HepG2 (cell line): ENCODE measurements at regions of chr12 and their contacts with region 1.

Region 1: DNA sequence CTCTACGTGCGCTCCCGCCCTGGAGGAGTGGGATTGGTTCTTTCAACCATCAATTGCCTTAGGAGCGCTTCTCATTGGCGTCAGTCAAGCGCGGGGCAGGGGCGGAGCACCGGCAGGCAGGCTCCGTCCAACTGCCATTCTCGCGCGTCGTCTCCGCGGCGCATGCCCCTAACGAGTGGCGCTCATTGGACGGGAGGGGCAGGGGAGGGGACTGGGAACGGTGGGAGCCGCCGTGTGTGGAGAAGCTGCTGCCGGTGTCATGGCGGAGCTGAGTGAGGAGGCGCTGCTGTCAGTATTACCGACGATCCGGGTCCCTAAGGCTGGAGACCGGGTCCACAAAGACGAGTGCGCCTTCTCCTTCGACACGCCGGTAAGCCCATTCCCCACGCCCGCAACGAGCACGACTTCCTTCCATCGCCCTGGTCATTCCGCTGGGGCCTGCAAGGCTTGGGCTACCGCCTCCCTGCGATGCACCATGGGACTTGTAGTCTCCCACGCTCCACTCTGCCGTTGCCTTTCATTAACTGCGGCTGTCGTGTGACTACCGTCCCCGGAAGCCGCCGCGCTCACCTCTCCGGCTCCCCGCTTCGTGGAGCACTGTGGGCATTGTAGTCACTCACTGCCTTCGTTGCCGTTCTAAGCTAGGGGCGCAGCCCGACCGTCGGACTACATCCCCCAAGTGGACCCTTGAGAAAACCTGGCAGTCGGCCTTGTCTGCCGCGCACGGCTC is at the start of gene USP5:
- DNase-seq: peak; percentile 98
- ATAC-seq: peak; percentile 86
- H3K4me3 ChIP-seq: peak within 1 kb of the TSS; percentile 79 to 95 (median 85)
- H3K27ac ChIP-seq: peak within 1 kb of the TSS; percentile 82
- H3K4me1 ChIP-seq: peaks cover 33% of the 10 kb centered on the region
- H3K27me3 ChIP-seq: no peaks in the 10 kb centered on the region
- CTCF ChIP-seq: 0 out of 2 replicates have a peak, but pooled peaks have one; percentile 7
- EP300 ChIP-seq: no peak
- POLR2A ChIP-seq: peak; percentile 70 to 90
- RAD21 ChIP-seq: peak; percentile 65
- total RNA-seq, gene USP5: 53.4 and 56.0 TPM in 2 replicates

Region 2: GRCh38 chr12:6559500-6559899 is 292.6 kb before region 1 on chr12:
- CTCF ChIA-PET with region 1: no interaction called
- POLR2A ChIA-PET with region 1: no interaction called
- in situ Hi-C with region 1: no loop called
- intact Hi-C with region 1: no loop called
- DNase-seq: no peak
- ATAC-seq: no peak
- H3K4me3 ChIP-seq: no peak overlapping the region
- H3K27ac ChIP-seq: no peak overlapping the region
- H3K4me1 ChIP-seq: peaks cover 11% of the 10 kb centered on the region
- H3K27me3 ChIP-seq: no peaks in the 10 kb centered on the region; a peak in 1 of 5 replicates
- CTCF ChIP-seq: no peak
- EP300 ChIP-seq: no peak
- POLR2A ChIP-seq: no peak
- RAD21 ChIP-seq: no peak

Region 3: DNA sequence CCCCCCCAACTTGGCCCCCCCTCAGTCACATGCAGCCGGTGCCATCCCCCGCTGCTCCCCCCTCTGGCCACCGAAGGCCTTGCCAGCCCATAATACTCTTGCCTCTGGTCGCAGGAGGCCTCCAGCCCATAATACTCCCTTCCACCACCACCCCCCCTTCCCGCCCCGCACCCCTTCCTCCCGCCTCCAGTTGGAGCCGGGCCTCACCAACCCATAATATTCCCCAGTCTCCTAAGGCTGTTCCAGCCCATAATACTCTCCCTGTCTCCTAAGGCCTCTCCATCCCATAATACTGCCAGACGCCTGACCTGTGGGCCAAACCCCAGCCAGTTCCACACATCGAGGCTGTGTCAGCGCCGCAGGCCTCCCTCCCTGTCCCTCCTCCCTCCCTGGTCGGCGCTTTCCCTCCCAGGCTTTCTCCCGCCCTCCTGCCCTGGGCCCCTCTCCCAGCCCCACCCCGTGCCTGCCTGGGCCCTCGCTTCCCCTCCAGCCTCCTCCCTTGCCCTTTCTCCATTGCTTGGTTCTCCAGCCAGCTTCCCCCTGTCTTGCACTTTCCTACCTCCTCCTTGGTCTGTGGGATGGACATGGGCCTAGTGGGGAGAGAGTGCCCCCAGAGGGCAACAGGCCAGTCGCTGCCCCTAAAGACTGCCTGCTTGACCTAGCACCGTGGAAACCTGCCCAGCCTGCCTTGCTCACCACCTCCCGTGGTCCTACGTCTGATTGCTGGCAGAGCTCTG is 238.1 kb before region 1 on chr12:
- CTCF ChIA-PET with region 1: no interaction called
- POLR2A ChIA-PET with region 1: interaction called, 14 read pairs
- in situ Hi-C with region 1: no loop called
- intact Hi-C with region 1: no loop called
- DNase-seq: peak; percentile 97
- ATAC-seq: peak; percentile 88
- H3K4me3 ChIP-seq: peak overlapping the region; percentile 11 to 70 (median 41); a peak in 5 of 6 replicates
- H3K27ac ChIP-seq: peak overlapping the region; percentile 74
- H3K4me1 ChIP-seq: peaks cover 41% of the 10 kb centered on the region
- H3K27me3 ChIP-seq: no peaks in the 10 kb centered on the region
- CTCF ChIP-seq: peak; percentile 75
- EP300 ChIP-seq: no peak
- POLR2A ChIP-seq: peak; percentile 41 to 75; a peak in 3 of 4 replicates
- RAD21 ChIP-seq: no peak

Region 4: GRCh38 chr12:6752921-6753771 is 98.9 kb before region 1 on chr12 and contains the start of gene MLF2:
- CTCF ChIA-PET with region 1: no interaction called
- POLR2A ChIA-PET with region 1: interaction called, 36 read pairs
- in situ Hi-C with region 1: no loop called
- intact Hi-C with region 1: no loop called
- DNase-seq: peak; percentile 96
- ATAC-seq: peak; percentile 95
- H3K4me3 ChIP-seq: peak within 1 kb of the TSS; percentile 73 to 99 (median 97)
- H3K27ac ChIP-seq: peak within 1 kb of the TSS; percentile 96
- H3K4me1 ChIP-seq: peaks cover 28% of the 10 kb centered on the region
- H3K27me3 ChIP-seq: no peaks in the 10 kb centered on the region
- CTCF ChIP-seq: peak; percentile 33
- EP300 ChIP-seq: peak in 1 of 2 experiments; percentile 22; a peak in 1 of 4 replicates
- POLR2A ChIP-seq: peak; percentile 79 to 91
- RAD21 ChIP-seq: no peak; the same call in 1 of the 2 replicates
- total RNA-seq, gene MLF2: 88.1 and 95.8 TPM in 2 replicates

Region 5: GRCh38 chr12:6825398-6826124 is 26.5 kb before region 1 on chr12:
- CTCF ChIA-PET with region 1: no interaction called
- POLR2A ChIA-PET with region 1: interaction called, 15 read pairs
- in situ Hi-C with region 1: no loop called
- intact Hi-C with region 1: no loop called
- DNase-seq: peak; percentile 67
- ATAC-seq: peak; percentile 65
- H3K4me3 ChIP-seq: no peak overlapping the region
- H3K27ac ChIP-seq: no peak overlapping the region
- H3K4me1 ChIP-seq: peaks cover 34% of the 10 kb centered on the region
- H3K27me3 ChIP-seq: peaks cover 2 to 6% of the 10 kb centered on the region in 2 experiments; a peak in 3 of 5 replicates
- CTCF ChIP-seq: peak; percentile 95
- EP300 ChIP-seq: no peak
- POLR2A ChIP-seq: no peak
- RAD21 ChIP-seq: peak; percentile 85

Region 6: DNA sequence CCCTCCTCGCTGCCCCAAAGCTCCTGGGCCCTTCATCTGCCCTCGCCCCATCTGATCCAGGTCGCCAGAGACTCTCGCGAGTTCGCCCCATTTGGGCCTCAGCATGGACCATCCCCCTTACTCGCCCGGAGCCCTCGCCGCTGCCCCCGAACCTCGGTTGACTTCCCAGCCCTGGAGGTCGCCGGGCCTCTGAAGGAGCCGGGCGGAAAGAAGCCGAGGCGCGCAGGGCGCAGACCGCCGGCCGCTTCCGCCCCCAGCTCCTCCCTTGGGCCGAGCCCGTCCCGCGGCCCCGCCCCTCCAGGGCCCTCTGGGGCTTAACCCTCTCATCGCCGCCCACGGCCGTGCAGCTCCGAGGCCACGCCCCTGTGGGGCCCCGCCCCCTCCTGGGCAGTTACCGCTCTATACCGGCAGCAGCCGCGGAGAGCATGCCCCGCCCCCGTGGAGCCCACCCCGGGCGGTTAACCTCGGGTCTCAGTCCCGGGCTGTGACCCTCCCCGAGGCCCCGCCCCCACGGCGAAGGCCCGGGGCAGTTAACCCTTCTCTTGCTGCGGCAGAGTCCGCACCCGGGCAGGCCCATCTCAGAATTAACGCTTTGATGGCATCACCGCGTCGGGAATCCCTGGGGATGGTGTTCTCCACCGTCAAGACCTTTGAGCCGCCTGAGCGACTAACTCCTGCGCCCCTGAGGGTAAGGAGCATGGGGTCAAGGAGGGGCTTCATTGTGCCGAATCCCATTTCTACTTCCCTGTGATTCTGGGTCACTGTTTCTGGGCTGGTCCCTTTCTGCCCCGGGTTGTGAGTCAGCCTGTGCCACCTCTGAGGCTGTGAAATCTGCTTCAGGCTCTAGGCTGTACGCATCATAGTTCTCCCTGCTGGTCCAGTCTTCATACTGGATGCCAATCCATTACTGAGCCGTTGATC is 21.3 kb after region 1 on chr12 and contains the start of gene SPSB2:
- CTCF ChIA-PET with region 1: no interaction called
- POLR2A ChIA-PET with region 1: interaction called, 132 read pairs
- in situ Hi-C with region 1: no loop called
- intact Hi-C with region 1: loop called (anchors 1 kb)
- DNase-seq: peak; percentile 94
- ATAC-seq: peak; percentile 81
- H3K4me3 ChIP-seq: peak within 1 kb of the TSS; percentile 74 to 95 (median 76)
- H3K27ac ChIP-seq: peak within 1 kb of the TSS; percentile 79
- H3K4me1 ChIP-seq: peaks cover 48% of the 10 kb centered on the region
- H3K27me3 ChIP-seq: no peaks in the 10 kb centered on the region; a peak in 1 of 5 replicates
- CTCF ChIP-seq: no peak
- EP300 ChIP-seq: 0 out of 4 replicates have a peak, but pooled peaks of 1 of the 2 experiments have one; percentile 5
- POLR2A ChIP-seq: no peak; a peak in 1 of 4 replicates
- RAD21 ChIP-seq: no peak
- total RNA-seq, gene SPSB2: 4.0 and 6.2 TPM in 2 replicates

Region 7: DNA sequence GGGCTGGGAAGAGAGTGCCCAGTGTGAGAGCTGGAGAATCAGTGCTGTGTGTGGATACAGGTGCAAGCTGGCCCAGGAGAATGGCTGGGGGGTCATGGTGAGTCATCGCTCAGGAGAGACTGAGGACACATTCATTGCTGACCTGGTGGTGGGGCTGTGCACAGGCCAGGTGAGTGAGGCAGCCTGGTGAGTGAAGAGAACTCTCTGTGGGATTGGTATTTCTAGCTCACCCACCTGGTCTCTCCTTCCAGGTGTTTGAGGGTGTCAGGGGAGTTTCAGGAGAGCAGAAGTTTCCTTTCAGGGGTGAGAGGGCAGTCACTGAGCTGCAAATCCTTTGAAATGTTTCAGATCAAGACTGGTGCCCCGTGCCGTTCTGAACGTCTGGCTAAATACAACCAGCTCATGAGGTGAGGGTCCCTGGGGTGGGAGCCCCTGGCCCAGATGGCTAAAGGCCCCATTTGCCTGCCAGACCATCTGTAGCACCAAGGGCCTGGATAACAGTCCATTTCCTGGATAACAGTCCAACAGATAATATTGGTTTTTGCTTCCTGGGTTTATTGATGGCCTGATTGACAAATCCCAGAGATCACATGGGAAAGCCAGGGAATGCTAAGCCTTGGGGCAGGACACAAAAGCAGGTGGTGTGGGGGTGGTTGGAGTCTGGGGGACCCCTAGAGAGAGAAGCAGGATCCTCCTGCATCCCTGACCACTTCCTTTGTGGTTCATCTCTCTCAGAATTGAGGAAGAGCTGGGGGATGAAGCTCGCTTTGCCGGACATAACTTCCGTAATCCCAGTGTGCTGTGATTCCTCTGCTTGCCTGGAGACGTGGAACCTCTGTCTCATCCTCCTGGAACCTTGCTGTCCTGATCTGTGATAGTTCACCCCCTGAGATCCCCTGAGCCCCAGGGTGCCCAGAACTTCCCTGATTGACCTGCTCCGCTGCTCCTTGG is 70.2 kb after region 1 on chr12:
- CTCF ChIA-PET with region 1: no interaction called
- POLR2A ChIA-PET with region 1: no interaction called
- in situ Hi-C with region 1: no loop called
- intact Hi-C with region 1: no loop called
- DNase-seq: no peak
- ATAC-seq: no peak
- H3K4me3 ChIP-seq: no peak overlapping the region
- H3K27ac ChIP-seq: no peak overlapping the region
- H3K4me1 ChIP-seq: peaks cover 34% of the 10 kb centered on the region
- H3K27me3 ChIP-seq: no peaks in the 10 kb centered on the region
- CTCF ChIP-seq: no peak
- EP300 ChIP-seq: no peak
- POLR2A ChIP-seq: no peak
- RAD21 ChIP-seq: no peak

Region 8: DNA sequence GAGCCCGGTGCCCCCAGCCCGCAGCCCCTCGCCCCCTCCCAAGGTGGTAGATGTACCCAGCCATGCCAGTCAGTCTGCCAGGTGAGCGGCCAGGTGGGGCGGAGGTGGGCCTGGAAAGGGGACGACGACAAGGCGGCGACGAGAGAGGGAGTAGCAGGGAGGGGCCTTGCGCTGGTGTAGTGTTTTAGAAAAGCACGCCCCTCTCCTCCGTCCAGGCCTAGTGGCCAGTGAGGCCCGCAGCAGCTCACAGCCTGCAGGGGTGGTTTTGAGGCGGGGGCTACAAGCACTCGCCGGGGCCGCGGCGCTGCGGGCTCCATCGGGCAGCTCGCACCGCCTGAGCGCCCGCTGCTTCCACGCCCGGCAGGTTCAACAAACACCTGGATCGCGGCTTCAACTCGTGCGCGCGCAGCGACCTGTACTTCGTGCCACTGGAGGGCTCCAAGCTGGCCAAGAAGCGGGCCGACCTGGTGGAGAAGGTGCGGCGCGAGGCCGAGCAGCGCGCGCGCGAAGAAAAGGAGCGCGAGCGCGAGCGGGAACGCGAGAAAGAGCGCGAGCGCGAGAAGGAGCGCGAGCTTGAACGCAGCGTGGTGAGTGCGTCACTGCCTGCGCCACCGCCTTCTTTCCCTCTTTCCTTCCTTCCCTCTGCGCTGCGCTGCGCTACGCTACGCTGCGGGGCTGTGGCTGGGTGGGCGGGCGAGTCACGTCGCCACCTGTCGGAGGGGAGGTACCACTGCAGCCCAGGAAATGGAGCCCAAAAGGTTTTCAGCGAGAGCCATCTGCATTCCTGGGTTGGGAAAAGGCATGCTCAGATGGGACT is 85.6 kb after region 1 on chr12:
- CTCF ChIA-PET with region 1: no interaction called
- POLR2A ChIA-PET with region 1: interaction called, 10 read pairs
- in situ Hi-C with region 1: no loop called
- intact Hi-C with region 1: no loop called
- DNase-seq: peak; percentile 91
- ATAC-seq: peak; percentile 93
- H3K4me3 ChIP-seq: peak overlapping the region; percentile 49 to 78 (median 70); a peak in 5 of 6 replicates
- H3K27ac ChIP-seq: peak overlapping the region; percentile 90
- H3K4me1 ChIP-seq: peaks cover 26% of the 10 kb centered on the region
- H3K27me3 ChIP-seq: no peaks in the 10 kb centered on the region
- CTCF ChIP-seq: peak; percentile 99
- EP300 ChIP-seq: 0 out of 4 replicates have a peak, but pooled peaks of 1 of the 2 experiments have one; percentile 10
- POLR2A ChIP-seq: peak in 1 of 2 experiments; percentile 63; a peak in 2 of 4 replicates
- RAD21 ChIP-seq: peak; percentile 66; the same call in 1 of the 2 replicates

Region 9: DNA sequence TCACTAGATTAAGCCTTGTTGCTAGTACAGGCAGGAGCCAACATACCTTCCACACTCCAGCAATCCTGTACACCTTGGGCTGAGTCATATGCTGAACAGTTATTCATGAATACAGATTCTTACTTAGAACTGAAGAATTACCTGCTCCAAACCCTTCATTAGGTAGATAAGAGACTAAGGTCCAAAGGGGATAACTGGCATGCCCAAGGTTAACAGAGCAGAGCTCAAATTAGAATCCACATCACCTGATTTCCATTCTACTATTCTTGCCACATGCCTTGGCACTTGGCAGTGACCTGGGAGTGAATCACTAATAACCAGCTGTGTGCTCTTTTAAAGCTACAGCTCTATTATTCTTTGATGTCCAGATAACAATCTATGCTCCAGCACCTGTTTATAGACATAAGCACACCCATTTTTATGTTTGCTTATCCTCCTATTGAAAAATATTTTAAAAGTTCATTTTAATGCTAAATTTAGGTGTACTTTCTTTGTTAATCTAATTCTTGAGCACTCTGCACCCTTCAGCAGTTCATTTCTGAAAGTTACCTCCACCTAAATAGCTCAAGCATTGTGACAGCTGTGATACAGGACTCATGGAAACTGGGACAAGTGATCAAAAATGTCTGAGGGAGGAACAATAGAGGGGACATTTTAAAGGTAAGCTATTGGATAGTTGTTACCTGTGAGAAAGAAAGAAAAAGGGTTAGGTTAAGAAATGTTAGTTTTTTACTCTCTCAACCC is 146.8 kb after region 1 on chr12:
- CTCF ChIA-PET with region 1: no interaction called
- POLR2A ChIA-PET with region 1: no interaction called
- in situ Hi-C with region 1: no loop called
- intact Hi-C with region 1: no loop called
- DNase-seq: peak; percentile 22
- ATAC-seq: peak; percentile 43; the same call in 2 of the 3 replicates
- H3K4me3 ChIP-seq: no peak overlapping the region
- H3K27ac ChIP-seq: no peak overlapping the region
- H3K4me1 ChIP-seq: peaks cover 32% of the 10 kb centered on the region
- H3K27me3 ChIP-seq: no peaks in the 10 kb centered on the region
- CTCF ChIP-seq: no peak
- EP300 ChIP-seq: no peak
- POLR2A ChIP-seq: no peak
- RAD21 ChIP-seq: no peak